Panc1 (cell line): ENCODE measurements at regions of chr11 and their contacts with region 1.

Region 1: GRCh38 chr11:34653826-34654490 is 33.1 kb downstream of the EHF start:
- DNase-seq: peak; percentile 82
- ATAC-seq: peak; percentile 95
- H3K4me3 ChIP-seq: peak overlapping the region in 1 of 2 experiments; percentile 34; a peak in 2 of 4 replicates
- H3K27ac ChIP-seq: peak overlapping the region; percentile 77
- H3K4me1 ChIP-seq: peaks cover 24% of the 10 kb centered on the region
- H3K27me3 ChIP-seq: no peaks in the 10 kb centered on the region
- CTCF ChIP-seq: peak; percentile 31; the same call in 1 of the 2 replicates

Region 2: DNA sequence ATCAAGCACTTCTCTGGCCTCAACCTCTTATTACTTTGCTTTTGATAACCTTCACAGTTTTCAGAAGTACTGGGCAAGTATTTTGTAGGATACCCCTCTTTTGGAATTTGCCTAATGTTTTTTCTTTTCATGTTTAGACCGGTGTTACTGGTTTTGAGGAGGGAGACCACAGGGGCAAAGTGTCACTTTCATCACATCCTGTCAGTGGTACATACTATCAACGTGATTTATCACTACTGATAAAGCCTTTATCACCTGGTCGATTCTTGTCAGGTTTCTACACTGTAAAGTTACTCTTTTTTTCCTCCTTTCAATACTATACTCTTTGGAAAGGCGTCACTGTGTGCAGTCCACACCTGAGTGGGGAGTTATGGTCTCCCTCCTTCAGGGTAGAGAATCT is 1734.6 kb before region 1 on chr11:
- CTCF ChIA-PET with region 1: no interaction called
- POLR2A ChIA-PET with region 1: interaction called, 16 read pairs
- in situ Hi-C with region 1: no loop called
- intact Hi-C with region 1: no loop called
- DNase-seq: no peak
- ATAC-seq: no peak
- H3K4me3 ChIP-seq: no peak overlapping the region
- H3K27ac ChIP-seq: no peak overlapping the region
- H3K4me1 ChIP-seq: peaks cover 3% of the 10 kb centered on the region; the same call in 1 of the 2 replicates
- H3K27me3 ChIP-seq: no peaks in the 10 kb centered on the region
- CTCF ChIP-seq: no peak

Region 3: DNA sequence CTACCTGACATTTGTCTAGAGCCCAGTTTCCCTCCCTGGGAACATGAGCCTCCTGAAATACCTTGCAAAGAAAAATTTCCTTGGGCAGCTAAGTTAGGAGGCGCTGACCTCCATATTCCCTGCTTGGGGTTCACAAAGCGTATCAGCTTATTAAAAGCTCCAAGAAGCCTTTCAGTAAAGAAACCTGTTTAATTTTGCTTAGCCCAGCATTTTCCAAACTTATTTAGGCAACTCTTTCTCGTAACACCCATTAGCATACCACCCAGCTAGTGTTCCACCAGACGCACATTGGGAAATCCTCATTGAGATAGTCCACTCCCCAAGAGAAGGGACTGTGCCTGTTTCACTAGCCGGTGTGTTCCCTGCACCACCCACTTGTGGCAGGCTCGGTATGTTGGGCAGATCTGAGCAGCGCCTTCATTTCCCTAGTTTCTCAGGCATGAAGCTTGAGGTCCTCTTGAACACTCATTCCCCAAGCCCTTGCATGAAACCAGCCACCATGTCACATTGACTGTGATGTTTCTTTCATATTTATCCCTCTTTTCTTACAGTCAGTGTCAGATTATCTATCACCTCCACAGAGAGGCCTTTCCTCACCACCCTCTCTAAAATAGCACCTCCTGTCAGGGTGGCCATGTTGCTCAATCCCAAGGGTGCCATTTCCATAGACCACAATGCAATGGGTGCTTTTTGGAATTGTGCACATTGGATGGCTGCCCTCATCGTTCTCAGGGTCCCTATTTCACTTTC is 127.9 kb before region 1 on chr11:
- CTCF ChIA-PET with region 1: no interaction called
- POLR2A ChIA-PET with region 1: no interaction called
- in situ Hi-C with region 1: no loop called
- intact Hi-C with region 1: no loop called
- DNase-seq: no peak
- ATAC-seq: no peak
- H3K4me3 ChIP-seq: no peak overlapping the region
- H3K27ac ChIP-seq: no peak overlapping the region
- H3K4me1 ChIP-seq: no peaks in the 10 kb centered on the region
- H3K27me3 ChIP-seq: no peaks in the 10 kb centered on the region
- CTCF ChIP-seq: no peak

Region 4: GRCh38 chr11:34890812-34891211 is 236.9 kb after region 1 on chr11:
- CTCF ChIA-PET with region 1: no interaction called
- POLR2A ChIA-PET with region 1: no interaction called
- in situ Hi-C with region 1: no loop called
- intact Hi-C with region 1: loop called (anchors 10 kb)
- DNase-seq: no peak
- ATAC-seq: peak; percentile 63; the same call in 1 of the 2 replicates
- H3K4me3 ChIP-seq: no peak overlapping the region
- H3K27ac ChIP-seq: peak overlapping the region; percentile 30; the same call in 1 of the 2 replicates
- H3K4me1 ChIP-seq: no peaks in the 10 kb centered on the region; the same call in 1 of the 2 replicates
- H3K27me3 ChIP-seq: no peaks in the 10 kb centered on the region
- CTCF ChIP-seq: peak; percentile 43; the same call in 1 of the 2 replicates